Naive thymus-derived CD4-positive, alpha-beta T cell (primary cell): ENCODE measurements at regions of chr5 and their contacts with region 1.

Region 1: GRCh38 chr5:111278845-111279504 is 54.8 kb downstream of the CAMK4 start:
- DNase-seq: peak; percentile 75 to 89 (median 82)
- ATAC-seq: peak; percentile 99
- H3K4me3 ChIP-seq: no peak overlapping the region
- H3K4me3 Mint-ChIP-seq: peak overlapping the region; percentile 2 to 83 (median 64)
- H3K27ac ChIP-seq: no peak overlapping the region
- H3K27ac Mint-ChIP-seq: peak overlapping the region in 7 of 9 donors; percentile 8 to 94 (median 77)
- H3K4me1 ChIP-seq: peaks cover 7 to 13% of the 10 kb centered on the region in 2 donors
- H3K4me1 Mint-ChIP-seq: peaks cover 29 to 94% (median 90%) of the 10 kb centered on the region in 7 donors
- H3K27me3 ChIP-seq: no peaks in the 10 kb centered on the region
- H3K27me3 Mint-ChIP-seq: no peaks in the 10 kb centered on the region

Region 2: DNA sequence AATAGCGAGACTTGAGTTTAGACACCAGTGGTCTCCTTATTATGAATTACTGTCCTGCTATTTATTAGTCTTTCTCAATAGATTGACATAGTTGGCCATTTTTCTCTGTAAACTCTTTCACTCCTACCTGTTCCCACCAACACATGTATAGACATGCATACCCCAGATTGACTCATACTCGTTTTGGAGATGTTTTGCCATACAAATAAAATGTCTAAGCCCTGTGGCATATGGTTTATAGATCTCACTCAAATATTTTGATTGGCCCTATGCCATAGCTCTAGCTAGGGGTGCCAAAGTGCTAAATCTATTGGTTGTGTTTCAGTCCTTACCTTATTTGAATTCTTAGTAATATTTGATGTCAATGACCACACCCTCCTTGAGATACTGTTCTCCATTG is 12.5 kb before region 1 on chr5:
- CTCF ChIA-PET with region 1: interaction called, 14 read pairs
- POLR2A ChIA-PET with region 1: interaction called, 4 read pairs
- intact Hi-C with region 1: loop called in 1 of 2 experiments (anchors 1 kb)
- DNase-seq: no peak
- ATAC-seq: no peak
- H3K4me3 ChIP-seq: no peak overlapping the region
- H3K4me3 Mint-ChIP-seq: peak overlapping the region in 2 of 10 donors; percentile 4 to 8
- H3K27ac ChIP-seq: no peak overlapping the region
- H3K27ac Mint-ChIP-seq: peak overlapping the region in 7 of 9 donors; percentile 37 to 67 (median 53)
- H3K4me1 ChIP-seq: peaks cover 0 to 28% of the 10 kb centered on the region in 2 donors
- H3K4me1 Mint-ChIP-seq: peaks cover 32 to 49% (median 39%) of the 10 kb centered on the region in 7 donors
- H3K27me3 ChIP-seq: no peaks in the 10 kb centered on the region
- H3K27me3 Mint-ChIP-seq: no peaks in the 10 kb centered on the region

Region 3: GRCh38 chr5:111478266-111478665 is 199.3 kb after region 1 on chr5:
- CTCF ChIA-PET with region 1: no interaction called
- POLR2A ChIA-PET with region 1: no interaction called
- intact Hi-C with region 1: loop called in 1 of 2 experiments (anchors 2 kb)
- DNase-seq: no peak
- ATAC-seq: no peak
- H3K4me3 ChIP-seq: no peak overlapping the region
- H3K4me3 Mint-ChIP-seq: no peak overlapping the region
- H3K27ac ChIP-seq: no peak overlapping the region
- H3K27ac Mint-ChIP-seq: no peak overlapping the region
- H3K4me1 ChIP-seq: no peaks in the 10 kb centered on the region
- H3K4me1 Mint-ChIP-seq: peaks cover 0 to 5% (median 2%) of the 10 kb centered on the region in 7 donors
- H3K27me3 ChIP-seq: no peaks in the 10 kb centered on the region
- H3K27me3 Mint-ChIP-seq: no peaks in the 10 kb centered on the region

Region 4: GRCh38 chr5:112379542-112380325 is 1100.8 kb after region 1 on chr5:
- CTCF ChIA-PET with region 1: no interaction called
- POLR2A ChIA-PET with region 1: no interaction called
- intact Hi-C with region 1: no loop called
- DNase-seq: no peak
- ATAC-seq: no peak
- H3K4me3 ChIP-seq: no peak overlapping the region
- H3K4me3 Mint-ChIP-seq: no peak overlapping the region
- H3K27ac ChIP-seq: no peak overlapping the region
- H3K27ac Mint-ChIP-seq: no peak overlapping the region
- H3K4me1 ChIP-seq: no peaks in the 10 kb centered on the region
- H3K4me1 Mint-ChIP-seq: peaks cover 0 to 2% (median 0%) of the 10 kb centered on the region in 7 donors
- H3K27me3 ChIP-seq: no peaks in the 10 kb centered on the region
- H3K27me3 Mint-ChIP-seq: peaks cover 7 to 48% (median 10%) of the 10 kb centered on the region in 5 donors